ENCODE measurements at regions of chr1 and their contacts with region 1.

Region 1: DNA sequence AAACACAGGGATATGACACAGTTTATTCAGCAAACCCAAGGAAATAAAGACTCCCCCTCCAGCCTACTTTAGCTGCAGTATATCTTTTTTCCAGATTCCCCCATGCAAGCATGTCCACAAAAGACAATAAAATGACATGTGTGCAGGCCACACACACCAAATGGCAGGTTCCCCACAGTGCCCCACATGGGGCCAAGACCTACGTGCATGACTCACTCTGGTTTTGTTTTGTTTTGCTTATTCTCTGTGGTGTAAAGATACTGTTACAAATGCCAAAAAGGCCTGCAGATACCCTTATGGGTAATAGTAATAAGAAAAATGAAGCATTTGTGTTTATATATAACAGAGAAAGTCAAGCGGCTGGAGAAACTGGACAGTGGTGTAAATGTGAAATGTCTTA is 71.6 kb downstream of the RD3 start:
- DNase-seq: no peak
- H3K4me3 Mint-ChIP-seq: no peak overlapping the region
- H3K27ac Mint-ChIP-seq: peak overlapping the region; percentile 36
- H3K4me1 Mint-ChIP-seq: peaks cover 31% of the 10 kb centered on the region
- H3K27me3 Mint-ChIP-seq: no peaks in the 10 kb centered on the region

Region 2: GRCh38 chr1:211267204-211267857 is 153.1 kb before region 1 on chr1:
- intact Hi-C with region 1: no loop called
- DNase-seq: no peak
- H3K4me3 Mint-ChIP-seq: no peak overlapping the region
- H3K27ac Mint-ChIP-seq: no peak overlapping the region
- H3K4me1 Mint-ChIP-seq: peaks cover 12% of the 10 kb centered on the region
- H3K27me3 Mint-ChIP-seq: no peaks in the 10 kb centered on the region

Region 3: GRCh38 chr1:211371406-211372105 is 48.8 kb before region 1 on chr1:
- intact Hi-C with region 1: no loop called
- DNase-seq: no peak
- H3K4me3 Mint-ChIP-seq: no peak overlapping the region
- H3K27ac Mint-ChIP-seq: no peak overlapping the region
- H3K4me1 Mint-ChIP-seq: peaks cover 28% of the 10 kb centered on the region
- H3K27me3 Mint-ChIP-seq: no peaks in the 10 kb centered on the region

Region 4: DNA sequence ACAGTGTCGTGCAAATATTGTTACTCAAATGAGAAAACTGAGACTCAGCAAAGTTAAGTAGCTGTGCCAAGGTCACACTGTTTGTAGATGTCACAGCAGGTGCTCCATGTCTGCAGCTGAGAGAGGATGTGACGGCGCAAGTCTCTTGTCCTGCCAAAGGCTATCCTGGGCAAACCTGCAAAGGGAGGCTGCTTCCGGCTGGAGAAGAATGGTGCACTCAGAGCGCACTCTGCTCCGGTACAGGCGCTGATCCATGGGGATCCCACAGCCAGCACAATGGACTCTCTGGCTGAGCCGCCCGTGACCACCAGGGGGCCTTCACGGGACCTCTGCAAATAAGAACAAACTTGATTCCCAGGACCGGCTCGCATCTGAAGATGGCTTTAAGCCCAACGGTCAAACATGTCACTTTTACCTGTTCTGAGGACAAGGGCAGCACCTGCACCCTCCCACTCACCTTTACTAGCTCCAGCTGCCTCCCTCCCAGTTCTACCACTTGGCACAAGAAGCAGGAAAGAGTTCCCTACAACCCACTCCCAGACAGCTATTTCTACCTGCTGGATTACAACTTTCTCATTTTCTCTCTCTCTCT is 49.6 kb after region 1 on chr1:
- intact Hi-C with region 1: loop called (anchors 5 kb)
- DNase-seq: no peak
- H3K4me3 Mint-ChIP-seq: no peak overlapping the region
- H3K27ac Mint-ChIP-seq: no peak overlapping the region
- H3K4me1 Mint-ChIP-seq: peaks cover 11% of the 10 kb centered on the region
- H3K27me3 Mint-ChIP-seq: peaks cover 21% of the 10 kb centered on the region

Measured in activated T-helper 2 cell treated with anti-CD3 and anti-CD28 coated beads, Interferon-gamma antibody, Interleukin-2, Interleukin-4, amounts not matched to agents 10 μg/mL and 5 μg/mL and 100 μg/mL, durations not matched to agents 14 hours and 24 hours and 36 hours (primary cell).